ENCODE measurements at regions of chr17 and their contacts with region 1.

Region 1: DNA sequence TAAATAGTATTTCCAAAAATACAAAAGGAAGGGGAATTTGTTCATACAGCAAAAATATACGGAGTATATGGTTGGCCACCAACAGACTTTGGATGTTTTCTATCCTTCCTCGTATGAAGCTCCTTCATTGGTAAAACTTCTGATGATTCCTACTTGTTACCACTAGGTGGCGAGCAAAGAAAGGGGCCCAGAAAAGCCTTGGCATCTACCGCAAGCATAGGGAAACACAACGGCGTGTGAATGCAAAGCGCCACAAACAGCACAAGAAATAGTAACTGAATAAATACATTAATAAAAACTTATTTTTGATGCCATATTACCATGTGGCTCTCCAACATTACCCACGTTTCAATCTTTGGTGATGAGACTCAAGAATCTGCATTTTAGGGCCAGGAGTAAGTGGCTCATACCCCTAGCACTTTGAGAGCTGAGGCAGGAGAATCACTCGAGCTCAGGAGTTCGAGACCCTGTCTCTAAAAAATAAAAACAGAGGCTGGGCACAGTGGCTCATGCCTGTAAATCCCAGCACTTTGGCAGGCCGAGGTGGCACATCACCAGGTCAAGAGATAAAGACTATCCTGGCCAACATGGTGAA is 34.5 kb downstream of the YWHAE start:
- DNase-seq: peak; percentile 28 to 87 (median 50)
- ATAC-seq: peak; percentile 73
- H3K4me3 ChIP-seq: no peak overlapping the region
- H3K4me3 Mint-ChIP-seq: peak overlapping the region; percentile 12
- H3K27ac ChIP-seq: peak overlapping the region in 1 of 2 donors; percentile 9
- H3K27ac Mint-ChIP-seq: peak overlapping the region; percentile 66
- H3K4me1 ChIP-seq: peaks cover 50% of the 10 kb centered on the region
- H3K4me1 Mint-ChIP-seq: peaks cover 76% of the 10 kb centered on the region
- H3K27me3 ChIP-seq: no peaks in the 10 kb centered on the region
- H3K27me3 Mint-ChIP-seq: no peaks in the 10 kb centered on the region
- CTCF ChIP-seq: peak; percentile 86

Region 2: DNA sequence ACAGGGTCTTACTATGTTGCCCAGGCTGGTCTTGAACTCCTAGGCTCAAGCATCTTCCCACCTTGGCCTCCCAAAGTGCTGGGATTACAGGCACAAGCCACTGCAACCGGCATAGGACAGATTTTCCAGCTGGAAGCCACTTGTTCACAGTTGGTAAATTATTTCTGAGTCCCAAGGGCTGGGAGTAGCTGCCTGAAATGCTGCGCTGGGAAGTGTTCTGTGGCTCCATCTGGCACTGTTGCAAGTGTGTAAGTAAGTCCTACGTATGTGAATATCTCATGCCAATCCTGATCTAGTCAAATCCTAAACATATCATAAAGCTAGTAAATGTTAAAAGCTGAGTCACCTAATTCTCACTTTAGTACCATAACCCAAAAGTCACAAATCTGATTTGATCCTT is 13.6 kb before region 1 on chr17:
- CTCF ChIA-PET with region 1: interaction called, 10 read pairs
- POLR2A ChIA-PET with region 1: no interaction called
- intact Hi-C with region 1: no loop called
- DNase-seq: no peak
- ATAC-seq: no peak
- H3K4me3 ChIP-seq: no peak overlapping the region
- H3K4me3 Mint-ChIP-seq: no peak overlapping the region
- H3K27ac ChIP-seq: no peak overlapping the region
- H3K27ac Mint-ChIP-seq: peak overlapping the region; percentile 50
- H3K4me1 ChIP-seq: peaks cover 2% of the 10 kb centered on the region
- H3K4me1 Mint-ChIP-seq: peaks cover 26% of the 10 kb centered on the region
- H3K27me3 ChIP-seq: no peaks in the 10 kb centered on the region
- H3K27me3 Mint-ChIP-seq: no peaks in the 10 kb centered on the region
- CTCF ChIP-seq: no peak

Region 3: GRCh38 chr17:1384905-1385435 is 19.4 kb after region 1 on chr17:
- CTCF ChIA-PET with region 1: interaction called, 24 read pairs
- POLR2A ChIA-PET with region 1: interaction called, 4 read pairs
- intact Hi-C with region 1: no loop called
- DNase-seq: no peak
- ATAC-seq: no peak
- H3K4me3 ChIP-seq: no peak overlapping the region
- H3K4me3 Mint-ChIP-seq: peak overlapping the region; percentile 48
- H3K27ac ChIP-seq: no peak overlapping the region
- H3K27ac Mint-ChIP-seq: peak overlapping the region; percentile 53
- H3K4me1 ChIP-seq: peaks cover 86% of the 10 kb centered on the region
- H3K4me1 Mint-ChIP-seq: peaks cover 56% of the 10 kb centered on the region
- H3K27me3 ChIP-seq: no peaks in the 10 kb centered on the region
- H3K27me3 Mint-ChIP-seq: no peaks in the 10 kb centered on the region
- CTCF ChIP-seq: no peak

Region 4: GRCh38 chr17:1399679-1400512 is 34.4 kb after region 1 on chr17 and contains the start of gene YWHAE:
- CTCF ChIA-PET with region 1: interaction called, 14 read pairs
- POLR2A ChIA-PET with region 1: interaction called, 10 read pairs
- intact Hi-C with region 1: loop called (anchors 1 kb)
- DNase-seq: peak; percentile 92 to 97 (median 96)
- ATAC-seq: peak; percentile 86
- H3K4me3 ChIP-seq: peak within 1 kb of the TSS; percentile 95
- H3K4me3 Mint-ChIP-seq: peak within 1 kb of the TSS; percentile 100
- H3K27ac ChIP-seq: peak within 1 kb of the TSS; percentile 93 to 96
- H3K27ac Mint-ChIP-seq: peak within 1 kb of the TSS; percentile 98
- H3K4me1 ChIP-seq: peaks cover 39% of the 10 kb centered on the region
- H3K4me1 Mint-ChIP-seq: peaks cover 37% of the 10 kb centered on the region
- H3K27me3 ChIP-seq: no peaks in the 10 kb centered on the region
- H3K27me3 Mint-ChIP-seq: no peaks in the 10 kb centered on the region
- CTCF ChIP-seq: no peak
- total RNA-seq, gene YWHAE: 116 to 133 TPM

Region 5: DNA sequence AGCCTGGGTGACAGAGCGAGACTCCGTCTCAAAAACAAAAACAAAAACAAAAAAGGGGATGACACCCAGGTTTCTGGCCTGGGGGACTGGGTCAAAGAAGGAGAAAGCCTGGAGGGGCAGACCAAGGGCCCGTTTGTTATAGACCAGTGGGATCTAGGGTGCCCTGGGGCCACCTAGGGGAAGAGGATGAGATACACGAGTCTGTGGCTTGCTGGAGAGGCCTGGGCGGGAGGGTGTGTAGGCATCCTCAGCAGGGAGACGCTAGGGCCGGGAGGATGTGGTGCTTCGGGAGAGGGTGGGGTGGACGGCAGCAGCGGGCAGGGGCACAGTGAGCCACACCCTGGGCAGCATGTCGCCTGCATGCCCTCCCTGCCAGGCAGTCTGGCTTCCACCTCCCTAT is 107.6 kb after region 1 on chr17:
- CTCF ChIA-PET with region 1: interaction called, 5 read pairs
- POLR2A ChIA-PET with region 1: no interaction called
- intact Hi-C with region 1: loop called (anchors 1 to 2 kb)
- DNase-seq: peak in 6 of 14 experiments; percentile 26 to 57 (median 42)
- ATAC-seq: peak; percentile 58
- H3K4me3 ChIP-seq: no peak overlapping the region
- H3K4me3 Mint-ChIP-seq: no peak overlapping the region
- H3K27ac ChIP-seq: no peak overlapping the region
- H3K27ac Mint-ChIP-seq: peak overlapping the region; percentile 69
- H3K4me1 ChIP-seq: peaks cover 12% of the 10 kb centered on the region
- H3K4me1 Mint-ChIP-seq: peaks cover 19% of the 10 kb centered on the region
- H3K27me3 ChIP-seq: no peaks in the 10 kb centered on the region
- H3K27me3 Mint-ChIP-seq: no peaks in the 10 kb centered on the region
- CTCF ChIP-seq: no peak

Region 6: GRCh38 chr17:1532836-1533602 is 167.5 kb after region 1 on chr17:
- CTCF ChIA-PET with region 1: interaction called, 15 read pairs
- POLR2A ChIA-PET with region 1: interaction called, 4 read pairs
- intact Hi-C with region 1: loop called in 1 of 2 experiments (anchors 1 kb)
- DNase-seq: peak in 13 of 14 experiments; percentile 29 to 78 (median 48)
- ATAC-seq: peak; percentile 97
- H3K4me3 ChIP-seq: no peak overlapping the region
- H3K4me3 Mint-ChIP-seq: no peak overlapping the region
- H3K27ac ChIP-seq: peak overlapping the region in 1 of 2 donors; percentile 0
- H3K27ac Mint-ChIP-seq: no peak overlapping the region
- H3K4me1 ChIP-seq: no peaks in the 10 kb centered on the region
- H3K4me1 Mint-ChIP-seq: no peaks in the 10 kb centered on the region
- H3K27me3 ChIP-seq: no peaks in the 10 kb centered on the region
- H3K27me3 Mint-ChIP-seq: no peaks in the 10 kb centered on the region
- CTCF ChIP-seq: peak; percentile 17